ENCODE measurements at regions of chr14 and their contacts with region 1.

Region 1: GRCh38 chr14:82046512-82047226 is 513.0 kb upstream of the SEL1L start:
- DNase-seq: no peak
- ATAC-seq: peak; percentile 81
- H3K4me3 ChIP-seq: no peak overlapping the region
- H3K27ac ChIP-seq: no peak overlapping the region
- H3K4me1 ChIP-seq: no peaks in the 10 kb centered on the region
- H3K27me3 ChIP-seq: no peaks in the 10 kb centered on the region
- CTCF ChIP-seq: no peak
- EP300 ChIP-seq: peak in 1 of 2 experiments; percentile 65; a peak in 3 of 4 replicates
- POLR2A ChIP-seq: no peak
- RAD21 ChIP-seq: no peak

Region 2: DNA sequence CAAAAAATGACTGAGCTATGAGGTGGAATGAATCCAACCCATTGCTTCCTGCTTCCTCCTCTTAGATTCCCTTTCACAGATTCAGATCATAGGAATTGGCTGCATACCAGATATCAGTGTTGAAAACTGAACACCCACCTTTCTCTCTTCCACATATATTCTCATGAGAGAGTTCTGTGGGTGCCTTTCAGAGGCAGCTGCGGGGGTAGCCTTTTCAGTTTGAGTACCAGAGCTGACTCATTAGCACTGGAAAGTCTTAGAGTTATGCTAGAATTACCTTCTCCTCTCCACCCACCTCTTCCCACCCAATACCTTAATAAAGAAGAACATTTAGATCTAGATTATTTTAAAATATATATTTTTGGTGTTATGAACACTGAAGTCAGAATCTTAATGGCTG is 17.6 kb before region 1 on chr14:
- CTCF ChIA-PET with region 1: interaction called, 7 read pairs
- POLR2A ChIA-PET with region 1: interaction called, 3 read pairs
- RAD21 ChIA-PET with region 1: interaction called, 26 read pairs
- SMC1A ChIA-PET with region 1: interaction called, 9 read pairs
- in situ Hi-C with region 1: no loop called
- intact Hi-C with region 1: no loop called
- DNase-seq: no peak
- ATAC-seq: peak; percentile 59
- H3K4me3 ChIP-seq: no peak overlapping the region
- H3K27ac ChIP-seq: no peak overlapping the region
- H3K4me1 ChIP-seq: no peaks in the 10 kb centered on the region
- H3K27me3 ChIP-seq: no peaks in the 10 kb centered on the region
- CTCF ChIP-seq: no peak
- EP300 ChIP-seq: no peak
- POLR2A ChIP-seq: no peak
- RAD21 ChIP-seq: no peak

Measured in GM12878 (cell line).